Mammary epithelial cell (primary cell): ENCODE measurements at regions of chr11 and their contacts with region 1.

Region 1: DNA sequence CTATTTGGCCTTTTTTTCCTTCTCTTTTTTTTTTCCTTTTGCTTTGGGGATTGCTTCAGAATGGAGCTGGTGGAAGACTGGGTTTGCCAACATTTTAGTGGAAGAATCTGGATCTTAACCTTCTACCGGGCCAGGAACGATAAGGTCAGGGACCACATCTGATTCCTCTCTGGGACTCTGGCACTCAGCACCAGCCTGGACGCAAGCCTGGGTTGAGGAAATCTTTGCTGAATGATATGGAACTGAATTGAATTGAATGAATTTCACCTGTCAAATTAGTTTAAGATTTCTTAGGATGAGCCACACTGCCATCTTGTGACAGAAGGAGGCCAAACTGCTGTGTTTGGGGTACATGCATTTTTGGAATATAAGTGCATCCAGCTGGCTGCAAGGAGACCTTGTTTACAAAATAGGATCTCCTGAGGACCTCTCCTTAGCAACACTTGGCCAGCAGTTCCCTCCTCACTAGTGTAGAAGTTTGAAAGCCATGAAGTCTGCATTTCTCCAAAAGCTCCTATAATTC is 30.4 kb downstream of the TPBGL start:
- DNase-seq: no peak
- H3K4me3 ChIP-seq: no peak overlapping the region
- H3K27ac ChIP-seq: no peak overlapping the region
- H3K4me1 ChIP-seq: no peaks in the 10 kb centered on the region
- H3K27me3 ChIP-seq: no peaks in the 10 kb centered on the region
- CTCF ChIP-seq: peak; percentile 38 to 53

Region 2: DNA sequence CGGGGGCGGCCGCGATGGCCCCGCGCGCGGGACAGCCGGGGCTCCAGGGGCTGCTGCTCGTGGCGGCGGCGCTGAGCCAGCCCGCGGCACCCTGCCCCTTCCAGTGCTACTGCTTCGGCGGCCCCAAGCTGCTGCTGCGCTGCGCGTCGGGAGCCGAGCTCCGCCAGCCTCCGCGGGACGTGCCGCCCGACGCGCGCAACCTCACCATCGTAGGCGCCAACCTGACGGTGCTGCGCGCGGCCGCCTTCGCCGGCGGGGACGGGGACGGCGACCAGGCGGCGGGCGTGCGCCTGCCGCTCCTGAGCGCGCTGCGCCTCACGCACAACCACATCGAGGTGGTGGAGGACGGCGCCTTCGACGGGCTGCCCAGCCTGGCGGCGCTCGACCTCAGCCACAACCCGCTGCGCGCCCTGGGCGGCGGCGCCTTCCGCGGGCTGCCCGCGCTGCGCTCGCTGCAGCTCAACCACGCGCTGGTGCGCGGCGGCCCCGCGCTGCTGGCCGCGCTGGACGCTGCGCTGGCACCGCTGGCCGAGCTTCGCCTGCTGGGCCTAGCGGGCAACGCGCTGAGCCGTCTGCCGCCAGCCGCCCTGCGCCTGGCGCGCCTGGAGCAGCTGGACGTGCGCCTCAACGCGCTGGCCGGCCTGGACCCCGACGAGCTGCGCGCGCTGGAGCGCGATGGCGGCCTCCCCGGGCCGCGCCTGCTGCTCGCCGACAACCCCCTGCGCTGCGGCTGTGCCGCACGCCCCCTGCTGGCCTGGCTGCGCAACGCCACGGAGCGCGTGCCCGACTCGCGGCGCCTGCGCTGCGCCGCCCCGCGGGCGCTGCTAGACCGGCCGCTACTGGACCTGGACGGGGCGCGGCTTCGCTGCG is 29.7 kb before region 1 on chr11:
- CTCF ChIA-PET with region 1: interaction called, 11 read pairs
- dilution Hi-C with region 1: no loop called
- in situ Hi-C with region 1: no loop called
- intact Hi-C with region 1: no loop called
- DNase-seq: peak; percentile 76
- H3K4me3 ChIP-seq: peak overlapping the region; percentile 31 to 60 (median 58)
- H3K27ac ChIP-seq: no peak overlapping the region
- H3K4me1 ChIP-seq: peaks cover 11% of the 10 kb centered on the region
- H3K27me3 ChIP-seq: peaks cover 11% of the 10 kb centered on the region
- CTCF ChIP-seq: peak; percentile 51 to 75

Region 3: GRCh38 chr11:75323609-75324008 is 52.7 kb after region 1 on chr11:
- CTCF ChIA-PET with region 1: no interaction called
- dilution Hi-C with region 1: loop called (anchors 5 kb)
- in situ Hi-C with region 1: no loop called
- intact Hi-C with region 1: no loop called
- DNase-seq: no peak
- H3K4me3 ChIP-seq: no peak overlapping the region
- H3K27ac ChIP-seq: no peak overlapping the region
- H3K4me1 ChIP-seq: peaks cover 36% of the 10 kb centered on the region
- H3K27me3 ChIP-seq: no peaks in the 10 kb centered on the region
- CTCF ChIP-seq: no peak

Region 4: GRCh38 chr11:75399344-75400145 is 128.6 kb after region 1 on chr11 and contains the start of gene RPS3:
- CTCF ChIA-PET with region 1: no interaction called
- dilution Hi-C with region 1: loop called (anchors 5 kb)
- in situ Hi-C with region 1: no loop called
- intact Hi-C with region 1: no loop called
- DNase-seq: peak; percentile 89
- H3K4me3 ChIP-seq: peak within 1 kb of the TSS; percentile 84 to 90 (median 89)
- H3K27ac ChIP-seq: peak within 1 kb of the TSS; percentile 87
- H3K4me1 ChIP-seq: peaks cover 30% of the 10 kb centered on the region
- H3K27me3 ChIP-seq: no peaks in the 10 kb centered on the region
- CTCF ChIP-seq: peak in 1 of 2 donors; percentile 26
- total RNA-seq, gene RPS3: 1,423 to 2,367 TPM